Thyroid gland (tissue), 4 donors: ENCODE measurements at regions of chr2 and their contacts with region 1.

Region 1: GRCh38 chr2:206115026-206115578 is 29.1 kb upstream of the INO80D start:
- DNase-seq: no peak
- H3K4me3 ChIP-seq: no peak overlapping the region
- H3K27ac ChIP-seq: no peak overlapping the region
- H3K4me1 ChIP-seq: no peaks in the 10 kb centered on the region
- H3K27me3 ChIP-seq: no peaks in the 10 kb centered on the region
- CTCF ChIP-seq: no peak
- POLR2A ChIP-seq: no peak

Region 2: DNA sequence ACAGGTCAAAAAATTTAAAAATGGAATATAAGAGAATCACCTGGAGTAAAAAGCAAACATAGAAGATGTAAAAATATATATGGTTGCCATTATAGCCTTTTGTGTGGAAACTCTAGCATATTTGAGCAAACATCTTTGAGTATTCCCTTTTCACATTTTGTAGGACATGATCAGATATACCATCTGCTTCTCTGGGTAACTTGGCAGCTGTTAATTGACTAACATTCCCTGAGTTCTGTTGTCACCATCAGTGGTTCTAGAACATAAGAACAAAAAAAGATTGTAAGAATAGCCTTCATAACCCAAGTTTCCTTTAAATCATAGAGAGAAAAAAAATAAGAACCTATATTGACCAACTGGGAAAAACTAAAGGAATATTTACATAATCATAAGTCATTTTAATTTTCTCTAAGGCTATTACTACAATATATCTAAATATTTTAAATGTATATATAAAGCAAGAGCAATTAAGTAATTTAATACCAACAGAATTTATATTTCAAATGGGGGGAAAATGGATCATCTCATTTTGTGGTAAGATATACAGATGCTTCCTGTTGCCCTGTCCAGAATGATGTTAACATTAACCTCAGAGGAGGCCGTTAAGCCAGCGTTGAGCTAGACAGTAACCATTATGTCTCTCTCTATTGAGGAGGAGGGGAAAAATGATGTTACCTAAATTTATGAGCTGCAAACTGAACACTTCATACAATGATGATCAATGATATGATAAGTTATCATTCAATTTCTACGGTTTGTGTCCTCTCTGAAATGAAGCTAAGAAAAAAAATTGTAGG is 19.4 kb before region 1 on chr2:
- intact Hi-C with region 1: loop called (anchors 1 kb)
- DNase-seq: no peak
- H3K4me3 ChIP-seq: no peak overlapping the region
- H3K27ac ChIP-seq: no peak overlapping the region
- H3K4me1 ChIP-seq: no peaks in the 10 kb centered on the region
- H3K27me3 ChIP-seq: no peaks in the 10 kb centered on the region
- CTCF ChIP-seq: no peak
- POLR2A ChIP-seq: no peak

Region 3: GRCh38 chr2:206392118-206392517 is 277.0 kb after region 1 on chr2:
- intact Hi-C with region 1: no loop called
- DNase-seq: no peak
- H3K4me3 ChIP-seq: no peak overlapping the region
- H3K27ac ChIP-seq: no peak overlapping the region
- H3K4me1 ChIP-seq: no peaks in the 10 kb centered on the region
- H3K27me3 ChIP-seq: no peaks in the 10 kb centered on the region
- CTCF ChIP-seq: no peak
- POLR2A ChIP-seq: no peak